Activated CD4-positive, alpha-beta memory T cell treated with anti-CD3 and anti-CD28 coated beads for 36 hours (primary cell): ENCODE measurements at regions of chr11 and their contacts with region 1.

Region 1: DNA sequence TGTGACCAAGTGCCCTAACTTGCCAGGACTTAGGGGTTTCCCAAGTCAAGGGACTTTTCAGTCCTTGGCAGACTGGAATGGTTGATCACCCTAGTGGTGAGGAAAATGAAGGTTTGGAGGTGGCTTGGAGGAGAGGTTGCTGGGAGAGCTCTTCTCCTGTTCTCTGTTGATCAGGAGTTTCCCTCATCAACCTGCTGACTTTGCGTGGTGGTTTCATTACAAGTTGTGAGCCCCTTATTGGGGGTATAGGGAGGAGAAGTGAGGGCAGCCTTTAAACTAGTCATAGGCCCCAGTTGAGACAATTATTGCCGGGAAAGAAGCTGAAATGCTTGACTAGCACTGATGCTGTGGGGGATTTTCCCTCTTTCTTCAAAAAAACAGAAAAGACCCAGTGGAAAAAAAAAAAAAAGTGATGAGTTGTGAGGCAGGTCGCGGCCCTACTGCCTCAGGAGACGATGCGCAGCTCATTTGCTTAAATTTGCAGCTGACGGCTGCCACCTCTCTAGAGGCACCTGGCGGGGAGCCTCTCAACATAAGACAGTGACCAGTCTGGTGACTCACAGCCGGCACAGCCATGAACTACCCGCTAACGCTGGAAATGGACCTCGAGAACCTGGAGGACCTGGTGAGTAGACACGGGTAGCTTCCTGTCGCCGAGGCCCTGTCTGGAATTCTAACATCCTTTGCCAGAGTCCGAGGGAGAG is at the start of gene CXCR5:
- DNase-seq: peak; percentile 84
- H3K4me3 Mint-ChIP-seq: peak within 1 kb of the TSS; percentile 85
- H3K27ac Mint-ChIP-seq: peak within 1 kb of the TSS; percentile 99
- H3K4me1 Mint-ChIP-seq: peaks cover 81% of the 10 kb centered on the region
- H3K27me3 Mint-ChIP-seq: no peaks in the 10 kb centered on the region
- total RNA-seq, gene CXCR5: 28.0 to 28.3 TPM

Region 2: GRCh38 chr11:118742304-118742703 is 141.2 kb before region 1 on chr11:
- CTCF ChIA-PET with region 1: no interaction called
- POLR2A ChIA-PET with region 1: no interaction called
- intact Hi-C with region 1: no loop called
- DNase-seq: no peak
- H3K4me3 Mint-ChIP-seq: no peak overlapping the region
- H3K27ac Mint-ChIP-seq: no peak overlapping the region
- H3K4me1 Mint-ChIP-seq: no peaks in the 10 kb centered on the region
- H3K27me3 Mint-ChIP-seq: no peaks in the 10 kb centered on the region

Region 3: GRCh38 chr11:118757876-118758399 is 125.6 kb before region 1 on chr11:
- CTCF ChIA-PET with region 1: no interaction called
- POLR2A ChIA-PET with region 1: no interaction called
- intact Hi-C with region 1: no loop called
- DNase-seq: no peak
- H3K4me3 Mint-ChIP-seq: no peak overlapping the region
- H3K27ac Mint-ChIP-seq: peak overlapping the region; percentile 46
- H3K4me1 Mint-ChIP-seq: peaks cover 2% of the 10 kb centered on the region
- H3K27me3 Mint-ChIP-seq: no peaks in the 10 kb centered on the region

Region 4: GRCh38 chr11:118845369-118845768 is 38.2 kb before region 1 on chr11:
- CTCF ChIA-PET with region 1: interaction called, 4 read pairs
- POLR2A ChIA-PET with region 1: no interaction called
- intact Hi-C with region 1: loop called (anchors 1 kb)
- DNase-seq: peak; percentile 55
- H3K4me3 Mint-ChIP-seq: no peak overlapping the region
- H3K27ac Mint-ChIP-seq: peak overlapping the region; percentile 24
- H3K4me1 Mint-ChIP-seq: peaks cover 45% of the 10 kb centered on the region
- H3K27me3 Mint-ChIP-seq: no peaks in the 10 kb centered on the region

Region 5: DNA sequence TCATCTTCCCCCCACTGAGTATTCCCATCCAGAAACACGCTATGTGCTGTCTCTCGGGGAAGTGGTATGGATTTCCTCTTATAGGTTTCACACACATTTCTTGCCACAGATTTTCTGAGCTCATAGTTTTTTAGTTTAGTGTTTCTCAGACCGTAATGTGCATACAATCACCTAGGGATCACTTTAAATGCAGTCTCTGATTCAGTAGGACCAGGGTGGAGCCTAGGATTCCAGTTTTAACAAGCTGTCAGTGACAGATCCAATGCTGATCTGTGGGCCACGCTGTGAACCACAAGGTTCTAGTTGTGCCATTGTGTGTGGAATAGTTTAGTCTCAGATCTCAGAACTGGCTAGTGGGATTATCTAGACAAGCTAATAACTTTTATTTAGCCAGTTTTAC is 23.5 kb before region 1 on chr11:
- CTCF ChIA-PET with region 1: no interaction called
- POLR2A ChIA-PET with region 1: no interaction called
- intact Hi-C with region 1: no loop called
- DNase-seq: no peak
- H3K4me3 Mint-ChIP-seq: no peak overlapping the region
- H3K27ac Mint-ChIP-seq: no peak overlapping the region
- H3K4me1 Mint-ChIP-seq: peaks cover 4% of the 10 kb centered on the region
- H3K27me3 Mint-ChIP-seq: no peaks in the 10 kb centered on the region

Region 6: DNA sequence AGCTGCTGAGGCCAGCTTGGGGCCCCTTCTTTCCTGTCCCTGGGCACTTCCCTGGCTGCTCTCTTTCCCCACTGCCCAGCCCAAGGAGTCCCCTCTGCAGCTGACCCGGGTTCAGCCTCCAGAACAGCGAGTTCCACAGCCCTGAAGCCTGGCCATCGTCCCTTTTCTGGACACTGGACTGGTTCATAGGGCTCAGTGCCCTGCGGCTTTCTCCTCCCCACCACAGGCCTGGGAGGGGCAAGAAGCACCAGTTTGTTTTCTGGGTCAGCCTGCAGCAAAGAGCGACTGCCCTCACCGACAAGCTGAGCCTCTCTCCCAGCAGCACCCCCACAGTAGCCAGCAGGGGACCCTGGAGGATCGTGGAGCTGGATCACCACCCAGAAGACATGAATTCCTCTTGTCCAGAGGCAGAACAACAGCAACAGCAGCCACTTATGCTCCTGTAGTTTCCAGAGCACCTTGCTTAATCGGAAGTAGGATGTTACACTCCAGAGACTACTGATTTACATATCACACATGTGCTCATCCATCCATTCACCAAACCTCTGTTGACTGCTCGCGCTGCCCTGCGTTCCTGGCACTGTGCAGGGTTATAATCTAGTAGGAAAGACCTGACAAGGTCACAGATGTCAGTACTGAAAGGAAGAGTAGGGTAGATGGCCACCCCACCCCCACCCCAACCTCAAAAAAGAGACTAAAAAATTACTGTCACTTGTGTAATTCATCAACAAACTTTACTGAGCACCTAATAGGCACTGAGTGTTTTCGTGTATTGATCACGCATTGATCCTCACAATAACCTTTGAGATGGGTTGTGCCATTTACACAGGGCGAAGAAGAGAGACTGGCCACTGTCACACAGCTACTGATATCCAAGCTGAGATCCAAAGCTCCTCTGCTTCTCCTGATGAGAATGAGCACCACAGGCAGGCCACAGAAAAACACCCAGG is 12.8 kb before region 1 on chr11:
- CTCF ChIA-PET with region 1: interaction called, 26 read pairs
- POLR2A ChIA-PET with region 1: interaction called, 63 read pairs
- intact Hi-C with region 1: loop called (anchors 1 kb)
- DNase-seq: peak; percentile 73
- H3K4me3 Mint-ChIP-seq: peak overlapping the region; percentile 83
- H3K27ac Mint-ChIP-seq: peak overlapping the region; percentile 99
- H3K4me1 Mint-ChIP-seq: peaks cover 56% of the 10 kb centered on the region
- H3K27me3 Mint-ChIP-seq: no peaks in the 10 kb centered on the region

Region 7: DNA sequence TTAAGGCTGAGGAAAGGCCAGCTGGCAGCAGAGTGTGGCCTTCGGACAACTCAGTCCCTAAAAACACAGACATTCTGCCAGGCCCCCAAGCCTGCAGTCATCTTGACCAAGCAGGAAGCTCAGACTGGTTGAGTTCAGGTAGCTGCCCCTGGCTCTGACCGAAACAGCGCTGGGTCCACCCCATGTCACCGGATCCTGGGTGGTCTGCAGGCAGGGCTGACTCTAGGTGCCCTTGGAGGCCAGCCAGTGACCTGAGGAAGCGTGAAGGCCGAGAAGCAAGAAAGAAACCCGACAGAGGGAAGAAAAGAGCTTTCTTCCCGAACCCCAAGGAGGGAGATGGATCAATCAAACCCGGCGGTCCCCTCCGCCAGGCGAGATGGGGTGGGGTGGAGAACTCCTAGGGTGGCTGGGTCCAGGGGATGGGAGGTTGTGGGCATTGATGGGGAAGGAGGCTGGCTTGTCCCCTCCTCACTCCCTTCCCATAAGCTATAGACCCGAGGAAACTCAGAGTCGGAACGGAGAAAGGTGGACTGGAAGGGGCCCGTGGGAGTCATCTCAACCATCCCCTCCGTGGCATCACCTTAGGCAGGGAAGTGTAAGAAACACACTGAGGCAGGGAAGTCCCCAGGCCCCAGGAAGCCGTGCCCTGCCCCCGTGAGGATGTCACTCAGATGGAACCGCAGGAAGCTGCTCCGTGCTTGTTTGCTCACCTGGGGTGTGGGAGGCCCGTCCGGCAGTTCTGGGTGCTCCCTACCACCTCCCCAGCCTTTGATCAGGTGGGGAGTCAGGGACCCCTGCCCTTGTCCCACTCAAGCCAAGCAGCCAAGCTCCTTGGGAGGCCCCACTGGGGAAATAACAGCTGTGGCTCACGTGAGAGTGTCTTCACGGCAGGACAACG is 11.9 kb after region 1 on chr11:
- CTCF ChIA-PET with region 1: interaction called, 9 read pairs
- POLR2A ChIA-PET with region 1: interaction called, 19 read pairs
- intact Hi-C with region 1: loop called (anchors 1 kb)
- DNase-seq: peak; percentile 89
- H3K4me3 Mint-ChIP-seq: peak overlapping the region; percentile 58
- H3K27ac Mint-ChIP-seq: peak overlapping the region; percentile 93
- H3K4me1 Mint-ChIP-seq: peaks cover 71% of the 10 kb centered on the region
- H3K27me3 Mint-ChIP-seq: no peaks in the 10 kb centered on the region